A549 (cell line): ENCODE measurements at regions of chr3 and their contacts with region 1.

Region 1: DNA sequence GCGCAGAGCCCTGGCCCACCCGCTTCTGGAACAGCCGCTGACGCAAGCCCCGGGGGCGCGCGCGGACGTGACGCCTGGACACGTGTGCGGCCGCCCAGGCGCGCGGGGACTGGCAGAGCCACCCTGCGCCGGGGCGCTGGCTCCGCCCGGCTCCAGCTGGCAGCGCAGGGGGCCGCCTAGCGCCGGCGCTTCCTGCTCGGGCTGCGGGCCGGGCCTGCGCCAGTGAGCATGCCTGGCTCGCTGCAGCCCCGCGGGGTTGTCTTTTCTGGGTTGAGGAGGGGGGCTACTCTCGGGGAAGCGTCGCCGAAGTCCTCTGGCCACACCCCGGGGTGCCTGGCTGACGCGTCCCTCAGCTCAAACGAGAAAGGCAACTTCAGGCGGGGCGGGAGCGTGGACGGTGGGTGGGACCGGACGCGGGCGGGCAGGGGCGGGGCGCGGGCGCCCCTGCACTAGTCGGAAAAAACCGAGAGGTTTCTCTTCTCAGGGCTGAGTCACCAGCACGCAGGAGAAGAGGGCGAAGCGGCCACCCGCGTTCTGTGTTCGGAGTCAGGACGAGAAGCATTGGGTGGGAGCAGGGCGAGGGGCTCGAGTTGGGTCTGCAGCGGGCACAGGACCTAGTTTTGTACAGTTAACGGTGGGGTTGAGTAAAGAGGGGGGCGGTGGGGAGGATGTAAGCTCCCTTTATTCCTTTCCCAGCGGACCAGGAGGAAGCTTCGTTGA is at the start of gene SIAH2:
- DNase-seq: peak; percentile 93 to 95
- ATAC-seq: peak; percentile 87 to 91
- H3K4me3 ChIP-seq: peak within 1 kb of the TSS; percentile 96
- H3K27ac ChIP-seq: peak within 1 kb of the TSS; percentile 95 to 97
- H3K4me1 ChIP-seq: peaks cover 24% of the 10 kb centered on the region
- CTCF ChIP-seq: no peak
- EP300 ChIP-seq: no peak
- POLR2A ChIP-seq: peak; percentile 94
- RAD21 ChIP-seq: no peak
- polyA plus RNA-seq, gene SIAH2: 24.8 and 28.6 TPM in 2 replicates

Region 2: DNA sequence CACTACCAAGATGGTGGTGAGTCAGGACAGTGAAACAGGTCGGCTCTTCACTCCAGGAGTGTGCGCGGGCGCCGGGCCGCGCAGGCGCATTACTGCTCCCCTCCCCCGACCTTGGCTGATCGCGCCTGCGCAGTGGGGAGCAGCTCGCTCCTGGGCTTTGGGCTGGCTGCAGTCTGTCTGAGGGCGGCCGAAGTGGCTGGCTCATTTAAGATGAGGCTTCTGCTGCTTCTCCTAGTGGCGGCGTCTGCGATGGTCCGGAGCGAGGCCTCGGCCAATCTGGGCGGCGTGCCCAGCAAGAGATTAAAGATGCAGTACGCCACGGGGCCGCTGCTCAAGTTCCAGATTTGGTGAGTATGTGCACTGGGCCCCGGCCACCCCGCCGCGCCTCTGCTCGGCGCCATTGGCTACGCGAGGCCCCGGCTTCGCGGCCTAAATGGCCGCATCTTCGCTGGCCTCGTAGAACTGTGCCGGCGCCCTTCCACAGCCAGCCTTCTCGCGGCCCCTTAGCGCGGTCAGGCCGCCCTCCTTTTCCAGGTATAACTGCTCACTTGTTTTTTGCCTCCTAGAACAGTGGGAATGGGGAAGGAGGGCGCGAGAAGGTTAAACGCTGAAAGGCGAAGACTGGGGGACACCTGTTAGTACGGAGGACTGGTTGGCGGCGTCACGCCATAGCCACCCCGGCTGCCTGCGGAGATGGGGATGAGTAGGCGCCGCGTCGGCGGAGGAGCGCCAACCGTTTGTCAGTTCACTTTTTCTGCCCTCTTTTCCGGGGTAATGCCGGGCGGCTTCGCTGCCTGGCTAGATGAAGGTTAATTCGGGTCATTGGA is 159.9 kb before region 1 on chr3 and contains the start of gene SELENOT:
- CTCF ChIA-PET with region 1: interaction called, 3 read pairs
- POLR2A ChIA-PET with region 1: interaction called, 11 read pairs
- DNase-seq: peak; percentile 94 to 97
- ATAC-seq: peak; percentile 94 to 97
- H3K4me3 ChIP-seq: peak within 1 kb of the TSS; percentile 70
- H3K27ac ChIP-seq: peak within 1 kb of the TSS; percentile 88 to 92
- H3K4me1 ChIP-seq: peaks cover 23% of the 10 kb centered on the region; the same call in 2 of the 3 replicates
- CTCF ChIP-seq: no peak
- EP300 ChIP-seq: no peak
- POLR2A ChIP-seq: peak; percentile 96
- RAD21 ChIP-seq: no peak
- polyA plus RNA-seq, gene SELENOT: 536 and 846 TPM in 2 replicates

Region 3: GRCh38 chr3:150703299-150704134 is 59.8 kb before region 1 on chr3 and contains the start of gene ERICH6:
- CTCF ChIA-PET with region 1: no interaction called
- POLR2A ChIA-PET with region 1: interaction called, 43 read pairs
- DNase-seq: peak; percentile 91 to 92
- ATAC-seq: peak; percentile 98 to 99
- H3K4me3 ChIP-seq: peak within 1 kb of the TSS; percentile 65
- H3K27ac ChIP-seq: peak within 1 kb of the TSS; percentile 79 to 91
- H3K4me1 ChIP-seq: peaks cover 3% of the 10 kb centered on the region; the same call in 1 of the 3 replicates
- CTCF ChIP-seq: no peak
- EP300 ChIP-seq: no peak
- POLR2A ChIP-seq: peak; percentile 29; the same call in 1 of the 2 replicates
- RAD21 ChIP-seq: no peak
- polyA plus RNA-seq, gene ERICH6: 0.06 and 0.07 TPM in 2 replicates

Region 4: GRCh38 chr3:150721285-150722130 is 41.8 kb before region 1 on chr3:
- CTCF ChIA-PET with region 1: interaction called, 24 read pairs
- POLR2A ChIA-PET with region 1: interaction called, 12 read pairs
- DNase-seq: peak; percentile 65 to 75
- ATAC-seq: peak; percentile 71 to 86; a peak in 5 of 6 replicates
- H3K4me3 ChIP-seq: no peak overlapping the region
- H3K27ac ChIP-seq: no peak overlapping the region
- H3K4me1 ChIP-seq: no peaks in the 10 kb centered on the region; the same call in 2 of the 3 replicates
- CTCF ChIP-seq: peak; percentile 85
- EP300 ChIP-seq: no peak
- POLR2A ChIP-seq: no peak
- RAD21 ChIP-seq: peak; percentile 84 to 89

Region 5: GRCh38 chr3:150727653-150728502 is 35.4 kb before region 1 on chr3:
- CTCF ChIA-PET with region 1: interaction called, 3 read pairs
- POLR2A ChIA-PET with region 1: interaction called, 12 read pairs
- DNase-seq: no peak
- ATAC-seq: no peak
- H3K4me3 ChIP-seq: no peak overlapping the region
- H3K27ac ChIP-seq: no peak overlapping the region
- H3K4me1 ChIP-seq: no peaks in the 10 kb centered on the region; the same call in 2 of the 3 replicates
- CTCF ChIP-seq: no peak
- EP300 ChIP-seq: no peak
- POLR2A ChIP-seq: no peak
- RAD21 ChIP-seq: no peak

Region 6: DNA sequence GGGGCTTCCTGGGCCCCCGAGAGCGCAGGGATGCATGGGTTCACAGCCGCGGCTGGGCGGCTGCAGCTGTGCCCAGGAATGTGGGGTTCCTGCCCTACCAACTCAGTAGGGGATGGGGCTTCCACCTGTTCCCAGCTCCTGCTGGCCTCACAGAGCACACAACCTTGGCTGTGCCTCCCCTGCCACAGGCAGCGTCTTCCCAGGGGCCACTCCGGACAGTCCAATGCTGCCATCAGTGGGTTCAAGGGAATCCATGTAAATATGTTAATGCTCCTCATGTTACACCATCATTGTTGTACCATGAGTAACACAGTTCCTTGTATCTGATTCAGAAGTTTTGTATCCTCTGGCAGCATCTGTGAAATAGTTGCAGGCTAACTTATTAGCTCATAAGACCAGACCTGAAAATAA is 11.8 kb after region 1 on chr3:
- CTCF ChIA-PET with region 1: interaction called, 69 read pairs
- POLR2A ChIA-PET with region 1: interaction called, 29 read pairs
- DNase-seq: no peak
- ATAC-seq: peak in 1 of 2 experiments; percentile 18; a peak in 1 of 6 replicates
- H3K4me3 ChIP-seq: no peak overlapping the region
- H3K27ac ChIP-seq: no peak overlapping the region
- H3K4me1 ChIP-seq: no peaks in the 10 kb centered on the region
- CTCF ChIP-seq: no peak
- EP300 ChIP-seq: no peak
- POLR2A ChIP-seq: no peak
- RAD21 ChIP-seq: no peak

Region 7: GRCh38 chr3:150830094-150830681 is 66.9 kb after region 1 on chr3:
- CTCF ChIA-PET with region 1: interaction called, 3 read pairs
- POLR2A ChIA-PET with region 1: interaction called, 10 read pairs
- DNase-seq: peak; percentile 16 to 32
- ATAC-seq: peak; percentile 64 to 85; a peak in 4 of 6 replicates
- H3K4me3 ChIP-seq: no peak overlapping the region
- H3K27ac ChIP-seq: no peak overlapping the region
- H3K4me1 ChIP-seq: no peaks in the 10 kb centered on the region
- CTCF ChIP-seq: 0 out of 3 replicates have a peak, but pooled peaks have one; percentile 11
- EP300 ChIP-seq: no peak
- POLR2A ChIP-seq: no peak
- RAD21 ChIP-seq: peak in 1 of 2 experiments; percentile 8; a peak in 1 of 5 replicates